IMR-90 (cell line): ENCODE measurements at regions of chr4 and their contacts with region 1.

Region 1: GRCh38 chr4:183675625-183676024 is 16.5 kb downstream of the TRAPPC11 start:
- DNase-seq: no peak
- ATAC-seq: no peak
- H3K4me3 ChIP-seq: no peak overlapping the region
- H3K27ac ChIP-seq: no peak overlapping the region
- H3K4me1 ChIP-seq: no peaks in the 10 kb centered on the region
- H3K27me3 ChIP-seq: no peaks in the 10 kb centered on the region
- CTCF ChIP-seq: no peak
- POLR2A ChIP-seq: no peak
- RAD21 ChIP-seq: no peak

Region 2: GRCh38 chr4:183686461-183686860 is 10.8 kb after region 1 on chr4:
- CTCF ChIA-PET with region 1: interaction called, 4 read pairs
- POLR2A ChIA-PET with region 1: interaction called, 17 read pairs
- dilution Hi-C with region 1: no loop called
- in situ Hi-C with region 1: no loop called
- intact Hi-C with region 1: no loop called
- DNase-seq: no peak
- ATAC-seq: no peak
- H3K4me3 ChIP-seq: no peak overlapping the region
- H3K27ac ChIP-seq: no peak overlapping the region
- H3K4me1 ChIP-seq: no peaks in the 10 kb centered on the region
- H3K27me3 ChIP-seq: no peaks in the 10 kb centered on the region
- CTCF ChIP-seq: no peak
- POLR2A ChIP-seq: no peak
- RAD21 ChIP-seq: no peak

Region 3: DNA sequence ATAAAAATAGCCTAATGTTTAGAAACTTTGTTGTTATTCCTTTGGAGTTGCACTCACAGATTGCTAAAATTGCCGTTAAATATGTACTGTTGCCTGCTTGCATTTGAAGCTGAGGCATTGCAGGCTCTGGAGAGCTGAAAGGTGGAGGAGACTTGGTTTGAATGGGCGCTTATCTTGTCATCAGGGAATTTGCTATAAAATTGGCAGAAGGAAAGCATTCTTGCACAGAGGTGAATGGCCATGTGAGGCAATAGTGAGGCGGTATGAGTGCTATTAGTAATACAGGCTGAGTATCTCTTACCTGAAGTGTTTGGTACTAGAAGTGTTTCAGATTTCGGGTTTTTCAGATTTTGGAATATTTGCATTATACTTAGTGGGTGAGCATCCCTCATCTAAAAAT is 24.8 kb after region 1 on chr4:
- CTCF ChIA-PET with region 1: no interaction called
- POLR2A ChIA-PET with region 1: no interaction called
- dilution Hi-C with region 1: no loop called
- in situ Hi-C with region 1: no loop called
- intact Hi-C with region 1: loop called (anchors 2 kb)
- DNase-seq: no peak
- ATAC-seq: no peak
- H3K4me3 ChIP-seq: no peak overlapping the region
- H3K27ac ChIP-seq: no peak overlapping the region
- H3K4me1 ChIP-seq: no peaks in the 10 kb centered on the region
- H3K27me3 ChIP-seq: no peaks in the 10 kb centered on the region
- CTCF ChIP-seq: no peak
- POLR2A ChIP-seq: no peak
- RAD21 ChIP-seq: no peak

Region 4: GRCh38 chr4:183714626-183715025 is 39.0 kb after region 1 on chr4:
- CTCF ChIA-PET with region 1: no interaction called
- POLR2A ChIA-PET with region 1: no interaction called
- dilution Hi-C with region 1: no loop called
- in situ Hi-C with region 1: no loop called
- intact Hi-C with region 1: loop called (anchors 5 kb)
- DNase-seq: no peak
- ATAC-seq: no peak
- H3K4me3 ChIP-seq: no peak overlapping the region
- H3K27ac ChIP-seq: no peak overlapping the region
- H3K4me1 ChIP-seq: no peaks in the 10 kb centered on the region
- H3K27me3 ChIP-seq: no peaks in the 10 kb centered on the region
- CTCF ChIP-seq: no peak
- POLR2A ChIP-seq: no peak
- RAD21 ChIP-seq: no peak